Left colon (tissue), 2 donors: ENCODE measurements at regions of chr9 and their contacts with region 1.

Region 1: DNA sequence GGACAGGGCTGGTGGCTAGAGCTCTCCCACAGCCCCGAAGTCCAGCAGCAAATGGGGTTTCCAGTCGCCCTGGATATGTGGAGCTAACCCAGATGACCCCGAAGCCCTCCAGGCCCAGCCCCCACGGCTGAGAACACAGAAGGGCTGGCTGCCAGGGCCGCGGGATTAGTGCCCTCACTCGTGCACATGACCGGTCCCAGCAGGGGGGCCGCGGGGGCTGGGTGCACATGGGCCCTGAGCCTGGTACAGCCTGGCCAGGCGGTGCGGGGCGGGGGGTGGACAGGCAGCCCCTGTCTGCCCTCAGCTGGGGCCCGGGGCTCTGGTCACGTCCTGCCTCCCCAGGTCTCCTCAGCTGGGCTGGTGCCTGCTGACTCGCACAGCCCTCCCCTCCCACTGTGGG is 5.9 kb downstream of the SSNA1 start:
- DNase-seq: peak in 1 of 2 donors; percentile 54
- ATAC-seq: no peak

Region 2: GRCh38 chr9:137007108-137007815 is 187.1 kb before region 1 on chr9:
- intact Hi-C with region 1: no loop called
- DNase-seq: no peak
- ATAC-seq: no peak

Region 3: DNA sequence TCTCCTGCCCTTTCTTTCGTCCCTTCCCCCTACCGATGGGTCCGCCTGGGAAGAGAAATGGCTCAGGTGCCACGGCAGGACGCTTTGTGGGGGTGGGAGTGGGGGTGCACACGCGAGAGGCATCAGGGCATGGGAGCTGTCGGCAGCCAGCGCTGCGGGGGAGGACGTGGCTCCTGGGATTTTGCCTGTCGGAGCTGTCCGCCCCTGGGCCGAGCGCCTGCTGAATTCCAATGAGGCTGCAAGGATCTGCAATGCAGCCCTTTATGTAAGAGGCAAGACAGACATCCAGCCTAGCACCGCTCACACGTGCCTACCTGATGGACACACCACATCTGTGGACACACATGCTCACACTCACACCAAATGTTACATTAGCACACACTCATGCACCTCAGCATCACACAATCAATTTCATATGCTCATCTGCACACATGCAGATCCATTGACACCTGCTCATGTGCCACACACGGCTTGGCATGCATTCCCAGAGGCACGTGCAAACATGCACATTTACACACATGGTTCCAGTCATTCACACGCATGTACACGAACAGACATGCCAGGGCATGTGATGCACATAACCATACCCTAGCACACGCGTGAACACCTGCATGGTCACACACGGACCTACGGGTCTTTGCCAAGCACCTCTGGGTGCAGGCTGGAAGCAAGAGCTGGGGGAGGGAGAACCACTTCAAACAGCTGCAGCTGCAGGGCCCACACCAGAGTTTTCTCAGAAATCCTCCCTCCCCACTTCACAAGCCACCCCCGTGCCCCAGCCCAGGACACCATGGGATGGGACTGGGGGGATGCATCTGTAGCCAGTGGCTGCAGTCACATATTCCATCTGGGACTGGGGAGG is 54.0 kb before region 1 on chr9:
- intact Hi-C with region 1: loop called in 1 of 2 experiments (anchors 5 kb)
- DNase-seq: no peak
- ATAC-seq: no peak